ENCODE measurements at regions of chr17 and their contacts with region 1.

Region 1: GRCh38 chr17:35540589-35541404 is 3.3 kb upstream of the SLFN12L start:
- DNase-seq: peak in 4 of 5 donors; percentile 23 to 58 (median 43)
- H3K4me3 ChIP-seq: peak overlapping the region; percentile 71
- H3K4me3 Mint-ChIP-seq: peak overlapping the region; percentile 85 to 95 (median 91)
- H3K27ac ChIP-seq: peak overlapping the region; percentile 74
- H3K27ac Mint-ChIP-seq: peak overlapping the region; percentile 91 to 100 (median 97)
- H3K4me1 ChIP-seq: peaks cover 37% of the 10 kb centered on the region
- H3K4me1 Mint-ChIP-seq: peaks cover 43 to 57% (median 51%) of the 10 kb centered on the region in 3 donors
- H3K27me3 ChIP-seq: no peaks in the 10 kb centered on the region
- H3K27me3 Mint-ChIP-seq: no peaks in the 10 kb centered on the region

Region 2: GRCh38 chr17:35170968-35171771 is 369.6 kb before region 1 on chr17:
- CTCF ChIA-PET with region 1: interaction called, 31 read pairs
- POLR2A ChIA-PET with region 1: no interaction called
- DNase-seq: peak in 3 of 5 donors; percentile 63 to 70 (median 65)
- H3K4me3 ChIP-seq: no peak overlapping the region
- H3K4me3 Mint-ChIP-seq: peak overlapping the region; percentile 22 to 77 (median 74)
- H3K27ac ChIP-seq: no peak overlapping the region
- H3K27ac Mint-ChIP-seq: peak overlapping the region; percentile 63 to 96 (median 88)
- H3K4me1 ChIP-seq: peaks cover 39% of the 10 kb centered on the region
- H3K4me1 Mint-ChIP-seq: peaks cover 41 to 51% (median 47%) of the 10 kb centered on the region in 3 donors
- H3K27me3 ChIP-seq: no peaks in the 10 kb centered on the region
- H3K27me3 Mint-ChIP-seq: no peaks in the 10 kb centered on the region

Region 3: DNA sequence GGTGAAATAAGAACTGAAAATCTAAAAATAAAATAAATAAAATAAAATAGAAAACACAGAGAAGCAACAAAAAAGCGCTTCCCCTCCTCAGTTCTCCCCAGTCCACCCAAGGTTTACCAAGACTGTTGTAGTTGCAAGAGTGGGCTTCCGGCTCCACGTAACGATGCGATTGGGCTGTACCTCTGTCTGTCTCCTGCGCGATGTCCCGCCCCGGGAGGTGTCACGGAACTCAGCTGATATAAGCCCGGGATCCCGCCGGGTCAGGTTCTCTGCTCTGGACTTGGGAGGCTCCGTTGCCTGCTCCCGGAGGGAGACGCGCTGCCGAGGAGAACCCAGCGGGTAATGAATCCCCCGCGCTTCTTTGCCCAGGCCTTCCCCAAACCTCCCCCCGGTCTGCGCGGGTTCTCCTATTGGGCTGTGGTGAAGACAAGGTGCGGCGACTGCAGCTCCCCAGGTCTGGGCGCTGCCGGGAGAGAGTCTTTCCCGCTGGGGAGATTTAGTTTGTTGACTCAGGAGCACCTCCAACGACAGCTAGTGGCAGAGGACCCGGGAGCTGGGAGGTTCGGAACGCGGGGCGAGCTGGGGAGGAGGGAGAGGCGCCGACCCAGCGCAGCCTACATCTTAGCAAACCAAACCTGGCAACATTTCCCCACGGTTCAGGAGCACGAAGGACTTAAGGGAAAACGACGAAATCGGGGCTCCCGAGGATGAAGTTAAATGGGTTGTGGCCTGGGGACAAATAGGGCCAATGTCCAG is 297.8 kb before region 1 on chr17 and contains the start of gene SLFN5:
- CTCF ChIA-PET with region 1: interaction called, 12 read pairs
- POLR2A ChIA-PET with region 1: interaction called, 6 read pairs
- DNase-seq: peak; percentile 88 to 96 (median 92)
- H3K4me3 ChIP-seq: peak within 1 kb of the TSS; percentile 99
- H3K4me3 Mint-ChIP-seq: peak within 1 kb of the TSS; percentile 97 to 100 (median 99)
- H3K27ac ChIP-seq: peak within 1 kb of the TSS; percentile 96
- H3K27ac Mint-ChIP-seq: peak within 1 kb of the TSS; percentile 98 to 100 (median 99)
- H3K4me1 ChIP-seq: peaks cover 33% of the 10 kb centered on the region
- H3K4me1 Mint-ChIP-seq: peaks cover 64 to 70% (median 68%) of the 10 kb centered on the region in 3 donors
- H3K27me3 ChIP-seq: no peaks in the 10 kb centered on the region
- H3K27me3 Mint-ChIP-seq: peaks cover 0 to 8% of the 10 kb centered on the region in 2 donors
- total RNA-seq, gene SLFN5: 28.6 to 30.2 TPM

Region 4: GRCh38 chr17:35486920-35487732 is 53.7 kb before region 1 on chr17:
- CTCF ChIA-PET with region 1: interaction called, 43 read pairs
- POLR2A ChIA-PET with region 1: interaction called, 27 read pairs
- DNase-seq: peak; percentile 55 to 84 (median 71)
- H3K4me3 ChIP-seq: peak overlapping the region; percentile 92
- H3K4me3 Mint-ChIP-seq: peak overlapping the region; percentile 84 to 100 (median 98)
- H3K27ac ChIP-seq: peak overlapping the region; percentile 85
- H3K27ac Mint-ChIP-seq: peak overlapping the region; percentile 87 to 100 (median 96)
- H3K4me1 ChIP-seq: peaks cover 31% of the 10 kb centered on the region
- H3K4me1 Mint-ChIP-seq: peaks cover 81 to 92% (median 88%) of the 10 kb centered on the region in 3 donors
- H3K27me3 ChIP-seq: no peaks in the 10 kb centered on the region
- H3K27me3 Mint-ChIP-seq: no peaks in the 10 kb centered on the region

Region 5: DNA sequence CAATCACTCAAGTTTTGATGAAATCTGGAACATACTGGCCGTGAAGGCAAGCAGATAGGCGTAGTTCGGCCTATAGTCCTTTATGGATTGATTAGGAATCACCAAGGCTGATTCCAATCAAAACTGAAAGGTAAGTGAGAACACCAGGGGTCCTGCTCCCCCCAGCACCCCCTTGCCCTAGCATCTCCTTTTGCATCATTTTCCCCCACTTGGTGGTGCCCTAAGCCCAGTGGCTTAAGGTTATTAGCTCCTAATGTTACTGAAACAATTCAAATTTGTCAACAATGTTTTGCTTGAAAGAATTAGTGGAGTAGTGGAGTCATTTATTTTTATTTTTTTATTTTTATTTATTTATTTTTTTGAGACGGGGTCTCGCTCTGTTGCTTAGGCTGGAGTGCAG is 14.9 kb after region 1 on chr17:
- CTCF ChIA-PET with region 1: no interaction called
- POLR2A ChIA-PET with region 1: no interaction called
- DNase-seq: no peak
- H3K4me3 ChIP-seq: no peak overlapping the region
- H3K4me3 Mint-ChIP-seq: no peak overlapping the region
- H3K27ac ChIP-seq: no peak overlapping the region
- H3K27ac Mint-ChIP-seq: no peak overlapping the region
- H3K4me1 ChIP-seq: no peaks in the 10 kb centered on the region
- H3K4me1 Mint-ChIP-seq: no peaks in the 10 kb centered on the region
- H3K27me3 ChIP-seq: no peaks in the 10 kb centered on the region
- H3K27me3 Mint-ChIP-seq: peaks cover 12 to 14% of the 10 kb centered on the region in 2 donors

Region 6: GRCh38 chr17:35630530-35631148 is 89.8 kb after region 1 on chr17:
- CTCF ChIA-PET with region 1: no interaction called
- POLR2A ChIA-PET with region 1: no interaction called
- DNase-seq: no peak
- H3K4me3 ChIP-seq: no peak overlapping the region
- H3K4me3 Mint-ChIP-seq: no peak overlapping the region
- H3K27ac ChIP-seq: no peak overlapping the region
- H3K27ac Mint-ChIP-seq: peak overlapping the region in 3 of 8 donors; percentile 43 to 54 (median 54)
- H3K4me1 ChIP-seq: no peaks in the 10 kb centered on the region
- H3K4me1 Mint-ChIP-seq: peaks cover 0 to 5% (median 4%) of the 10 kb centered on the region in 3 donors
- H3K27me3 ChIP-seq: no peaks in the 10 kb centered on the region
- H3K27me3 Mint-ChIP-seq: no peaks in the 10 kb centered on the region